ENCODE measurements at regions of chr1 and their contacts with region 1.

Region 1: DNA sequence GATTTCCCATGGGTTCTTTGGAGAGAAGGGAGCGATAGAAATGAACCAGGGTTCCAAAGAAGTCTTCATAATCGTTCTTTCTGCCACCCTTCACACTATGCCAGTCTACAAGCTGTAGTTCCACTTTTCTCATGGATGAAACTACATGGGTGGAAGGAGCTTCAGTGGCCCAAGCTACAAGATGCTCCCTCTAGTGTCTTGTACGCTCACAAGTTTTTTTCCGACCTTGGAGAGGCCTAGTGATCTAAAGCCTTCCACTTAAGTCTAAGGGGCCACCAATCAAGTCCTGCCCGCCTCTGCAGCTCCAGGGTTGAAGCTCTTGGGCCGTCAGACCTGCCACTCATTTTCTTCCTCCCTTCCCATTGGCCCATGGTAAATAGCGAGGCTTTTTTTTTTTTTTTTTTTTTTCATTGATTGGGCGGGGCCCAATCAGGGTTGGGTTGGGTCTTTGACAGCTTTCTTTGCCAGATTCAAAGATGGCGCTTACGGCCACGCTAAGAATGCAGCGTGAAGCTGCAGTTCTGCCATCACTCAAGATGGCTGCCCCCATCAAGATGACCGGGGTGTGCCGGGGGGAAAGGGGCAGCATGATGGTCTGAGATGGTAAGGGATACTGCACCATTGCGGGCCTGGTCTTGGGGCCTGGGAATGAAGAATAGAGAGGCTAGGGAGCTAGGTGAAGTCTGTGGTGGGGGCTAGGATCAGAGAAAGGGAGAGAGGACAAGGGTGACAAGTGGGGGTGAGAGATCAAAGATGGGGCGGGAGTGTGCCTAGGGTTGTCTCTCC is at the start of gene TOMM40L:
- DNase-seq: peak; percentile 100
- ATAC-seq: peak; percentile 89
- H3K4me3 ChIP-seq: peak within 1 kb of the TSS; percentile 79
- H3K27ac ChIP-seq: peak within 1 kb of the TSS; percentile 33
- H3K4me1 ChIP-seq: peaks cover 26% of the 10 kb centered on the region
- H3K27me3 ChIP-seq: no peaks in the 10 kb centered on the region
- CTCF ChIP-seq: peak; percentile 75
- total RNA-seq, gene TOMM40L: 23.2 and 26.1 TPM in 2 replicates

Region 2: GRCh38 chr1:161185282-161185682 is 40.4 kb before region 1 on chr1:
- CTCF ChIA-PET with region 1: interaction called, 11 read pairs
- POLR2A ChIA-PET with region 1: no interaction called
- intact Hi-C with region 1: no loop called
- DNase-seq: no peak
- ATAC-seq: no peak
- H3K4me3 ChIP-seq: no peak overlapping the region
- H3K27ac ChIP-seq: no peak overlapping the region
- H3K4me1 ChIP-seq: peaks cover 15% of the 10 kb centered on the region
- H3K27me3 ChIP-seq: no peaks in the 10 kb centered on the region
- CTCF ChIP-seq: no peak

Region 3: GRCh38 chr1:161201828-161202725 is 23.6 kb before region 1 on chr1 and contains the start of gene NDUFS2:
- CTCF ChIA-PET with region 1: interaction called, 13 read pairs
- POLR2A ChIA-PET with region 1: no interaction called
- intact Hi-C with region 1: loop called (anchors 1 kb)
- DNase-seq: peak; percentile 99
- ATAC-seq: peak; percentile 96
- H3K4me3 ChIP-seq: peak within 1 kb of the TSS; percentile 81
- H3K27ac ChIP-seq: peak within 1 kb of the TSS; percentile 60
- H3K4me1 ChIP-seq: peaks cover 26% of the 10 kb centered on the region
- H3K27me3 ChIP-seq: no peaks in the 10 kb centered on the region
- CTCF ChIP-seq: peak; percentile 59
- total RNA-seq, gene NDUFS2: 168 TPM in 2 replicates

Region 4: GRCh38 chr1:161292631-161293030 is 66.9 kb after region 1 on chr1:
- CTCF ChIA-PET with region 1: interaction called, 30 read pairs
- POLR2A ChIA-PET with region 1: interaction called, 3 read pairs
- intact Hi-C with region 1: loop called (anchors 1 kb)
- DNase-seq: no peak
- ATAC-seq: no peak
- H3K4me3 ChIP-seq: no peak overlapping the region
- H3K27ac ChIP-seq: no peak overlapping the region
- H3K4me1 ChIP-seq: no peaks in the 10 kb centered on the region
- H3K27me3 ChIP-seq: peaks cover 11% of the 10 kb centered on the region; the same call in 1 of the 2 replicates
- CTCF ChIP-seq: no peak

Region 5: GRCh38 chr1:161374373-161374772 is 148.6 kb after region 1 on chr1:
- CTCF ChIA-PET with region 1: interaction called, 39 read pairs
- POLR2A ChIA-PET with region 1: interaction called, 7 read pairs
- intact Hi-C with region 1: loop called (anchors 1 kb)
- DNase-seq: peak; percentile 53
- ATAC-seq: peak; percentile 76
- H3K4me3 ChIP-seq: no peak overlapping the region
- H3K27ac ChIP-seq: no peak overlapping the region
- H3K4me1 ChIP-seq: no peaks in the 10 kb centered on the region
- H3K27me3 ChIP-seq: no peaks in the 10 kb centered on the region
- CTCF ChIP-seq: peak; percentile 66

Region 6: GRCh38 chr1:161726596-161727457 is 501.1 kb after region 1 on chr1:
- CTCF ChIA-PET with region 1: interaction called, 12 read pairs
- POLR2A ChIA-PET with region 1: no interaction called
- intact Hi-C with region 1: no loop called
- DNase-seq: peak; percentile 81
- ATAC-seq: peak; percentile 62
- H3K4me3 ChIP-seq: peak overlapping the region; percentile 85
- H3K27ac ChIP-seq: peak overlapping the region; percentile 72
- H3K4me1 ChIP-seq: peaks cover 77% of the 10 kb centered on the region
- H3K27me3 ChIP-seq: no peaks in the 10 kb centered on the region
- CTCF ChIP-seq: no peak

Measured in PC-3 (cell line).